Tibial artery (tissue), 4 donors: ENCODE measurements at regions of chr11 and their contacts with region 1.

Region 1: DNA sequence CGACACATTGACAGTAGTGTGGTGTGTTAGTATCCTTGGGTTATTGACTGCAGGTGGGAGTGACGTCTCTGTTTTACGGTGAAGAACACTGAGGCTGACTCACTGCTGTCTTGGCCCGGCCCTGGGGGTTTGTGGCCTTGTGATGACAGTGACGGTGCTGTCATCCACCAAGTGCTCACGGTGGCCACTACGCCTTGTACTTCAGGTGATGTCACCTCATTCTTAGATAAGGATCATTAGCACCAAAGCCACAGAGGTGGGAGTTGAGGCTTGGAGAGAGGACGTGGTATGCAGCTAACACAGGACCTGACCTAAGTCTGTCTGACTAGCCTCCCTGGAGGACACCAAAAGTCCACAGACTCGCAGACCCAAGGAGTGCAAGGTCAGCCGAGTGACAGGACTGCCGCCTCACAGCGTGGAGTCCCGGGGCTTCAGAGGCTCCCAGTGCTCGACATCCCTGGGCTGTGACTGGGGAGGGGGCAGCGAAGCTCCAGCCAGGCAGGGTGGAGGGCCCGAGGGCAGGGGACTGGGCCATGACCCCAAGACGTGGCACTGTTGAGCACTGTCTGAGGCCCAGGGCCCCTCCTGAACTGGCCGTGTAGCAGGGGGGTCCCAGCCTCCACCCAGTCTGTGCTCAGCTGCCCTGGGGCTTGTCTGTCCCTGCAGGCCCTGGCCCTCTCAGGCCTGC is 56.5 kb downstream of the NAT10 start:
- DNase-seq: no peak
- H3K4me3 ChIP-seq: no peak overlapping the region
- H3K27ac ChIP-seq: no peak overlapping the region
- H3K4me1 ChIP-seq: peaks cover 0 to 6% (median 5%) of the 10 kb centered on the region in 4 donors
- H3K27me3 ChIP-seq: no peaks in the 10 kb centered on the region
- CTCF ChIP-seq: no peak

Region 2: DNA sequence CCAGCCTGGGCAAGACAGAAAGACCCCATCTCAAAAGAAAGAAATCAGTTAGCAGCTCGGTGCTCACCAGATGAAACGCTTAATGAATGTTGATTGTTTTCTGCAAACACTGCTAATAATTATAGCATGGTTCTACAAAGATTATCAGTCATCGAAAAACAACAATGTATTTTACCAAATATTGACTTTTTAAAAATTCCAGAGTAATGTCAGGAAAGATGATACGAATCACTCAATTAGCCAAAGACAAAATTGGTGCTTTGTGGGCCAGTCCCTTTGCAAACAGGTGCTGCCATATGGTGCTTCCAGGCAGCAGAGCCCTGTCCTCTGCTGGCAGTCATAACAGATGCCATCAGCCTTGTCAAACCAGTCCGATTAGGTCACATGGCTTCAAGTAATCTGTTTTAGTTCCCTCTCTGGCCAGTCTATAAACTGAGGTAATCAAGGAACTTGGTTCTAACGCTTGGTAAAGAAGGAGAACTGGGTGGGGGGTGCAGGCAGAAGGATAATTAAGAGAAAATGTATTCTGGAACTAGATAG is 159.6 kb before region 1 on chr11:
- intact Hi-C with region 1: loop called (anchors 10 kb)
- DNase-seq: no peak
- H3K4me3 ChIP-seq: no peak overlapping the region
- H3K27ac ChIP-seq: no peak overlapping the region
- H3K4me1 ChIP-seq: peaks cover 0 to 4% (median 1%) of the 10 kb centered on the region in 4 donors
- H3K27me3 ChIP-seq: no peaks in the 10 kb centered on the region
- CTCF ChIP-seq: no peak

Region 3: DNA sequence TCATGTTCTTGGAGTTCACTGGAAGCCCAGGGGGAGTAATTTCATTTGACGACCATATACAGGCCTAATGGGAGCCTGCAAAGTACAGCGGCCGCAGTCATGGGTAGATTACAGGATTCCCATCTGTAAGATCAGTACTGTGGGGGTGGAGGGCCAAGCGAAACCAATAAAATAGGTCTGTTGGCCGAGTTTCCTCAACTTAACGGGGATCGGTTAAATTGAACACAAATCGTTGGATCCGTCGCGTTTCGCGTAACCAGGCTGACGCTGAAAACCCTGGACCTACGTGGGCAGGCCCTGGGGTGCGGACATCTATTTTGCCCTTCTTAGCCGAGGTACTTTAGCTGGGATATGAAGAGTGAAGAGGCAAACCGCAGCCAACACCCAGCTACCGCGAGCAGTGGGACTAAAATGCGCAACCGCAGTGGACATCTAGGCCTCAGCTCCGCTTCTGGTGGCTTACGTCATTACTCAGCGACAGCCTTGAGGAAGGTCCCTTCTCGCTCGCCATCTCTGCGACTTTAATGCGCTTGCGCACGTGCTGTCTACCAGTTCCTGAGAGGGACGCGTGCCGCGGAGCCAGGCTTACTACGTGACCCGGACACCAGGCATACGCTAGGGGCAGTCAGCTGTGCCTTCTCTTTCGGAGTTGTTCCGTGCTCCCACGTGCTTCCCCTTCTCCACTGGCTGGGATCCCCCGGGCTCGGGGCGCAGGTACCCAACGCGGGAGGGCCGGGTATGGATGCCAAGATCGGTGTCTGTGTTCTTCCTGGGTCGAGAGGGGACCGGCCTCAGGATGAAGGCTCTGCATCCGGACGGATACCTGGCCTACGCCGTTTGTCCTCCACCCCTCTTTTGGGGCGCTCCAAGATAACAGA is 56.6 kb before region 1 on chr11 and contains the start of gene NAT10:
- intact Hi-C with region 1: no loop called
- DNase-seq: peak; percentile 98
- H3K4me3 ChIP-seq: peak within 1 kb of the TSS; percentile 64 to 67
- H3K27ac ChIP-seq: peak within 1 kb of the TSS; percentile 95 to 96
- H3K4me1 ChIP-seq: peaks cover 0 to 19% (median 16%) of the 10 kb centered on the region in 4 donors
- H3K27me3 ChIP-seq: no peaks in the 10 kb centered on the region
- CTCF ChIP-seq: no peak